Transverse colon (tissue), 4 donors: ENCODE measurements at regions of chr12 and their contacts with region 1.

Region 1: DNA sequence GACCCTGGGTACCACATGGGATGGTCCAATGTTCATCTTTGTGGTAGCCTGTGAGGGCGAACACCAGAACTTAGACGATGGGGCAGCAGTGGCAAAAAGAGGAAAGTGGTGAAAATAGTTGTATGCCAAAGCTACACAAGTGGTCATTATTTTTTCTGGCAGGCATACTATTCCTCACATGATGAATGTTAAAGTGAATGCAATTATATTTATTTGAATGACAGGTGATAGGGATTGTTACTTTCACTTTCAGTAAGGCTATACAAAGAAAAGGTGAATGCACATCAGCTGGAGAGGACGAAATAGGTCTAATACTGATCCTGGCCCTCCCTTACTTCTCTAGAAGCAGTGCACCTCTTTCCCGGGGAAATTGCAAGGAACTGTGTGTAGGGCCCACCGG is 470.1 kb downstream of the TMTC2 start:
- DNase-seq: no peak
- H3K4me3 ChIP-seq: no peak overlapping the region
- H3K27ac ChIP-seq: no peak overlapping the region
- H3K4me1 ChIP-seq: no peaks in the 10 kb centered on the region
- H3K27me3 ChIP-seq: no peaks in the 10 kb centered on the region
- CTCF ChIP-seq: no peak
- EP300 ChIP-seq: no peak
- POLR2A ChIP-seq: no peak

Region 2: GRCh38 chr12:83102499-83102898 is 54.3 kb before region 1 on chr12:
- in situ Hi-C with region 1: no loop called
- intact Hi-C with region 1: no loop called
- DNase-seq: no peak
- H3K4me3 ChIP-seq: no peak overlapping the region
- H3K27ac ChIP-seq: no peak overlapping the region
- H3K4me1 ChIP-seq: no peaks in the 10 kb centered on the region
- H3K27me3 ChIP-seq: no peaks in the 10 kb centered on the region
- CTCF ChIP-seq: no peak
- EP300 ChIP-seq: no peak
- POLR2A ChIP-seq: no peak

Region 3: DNA sequence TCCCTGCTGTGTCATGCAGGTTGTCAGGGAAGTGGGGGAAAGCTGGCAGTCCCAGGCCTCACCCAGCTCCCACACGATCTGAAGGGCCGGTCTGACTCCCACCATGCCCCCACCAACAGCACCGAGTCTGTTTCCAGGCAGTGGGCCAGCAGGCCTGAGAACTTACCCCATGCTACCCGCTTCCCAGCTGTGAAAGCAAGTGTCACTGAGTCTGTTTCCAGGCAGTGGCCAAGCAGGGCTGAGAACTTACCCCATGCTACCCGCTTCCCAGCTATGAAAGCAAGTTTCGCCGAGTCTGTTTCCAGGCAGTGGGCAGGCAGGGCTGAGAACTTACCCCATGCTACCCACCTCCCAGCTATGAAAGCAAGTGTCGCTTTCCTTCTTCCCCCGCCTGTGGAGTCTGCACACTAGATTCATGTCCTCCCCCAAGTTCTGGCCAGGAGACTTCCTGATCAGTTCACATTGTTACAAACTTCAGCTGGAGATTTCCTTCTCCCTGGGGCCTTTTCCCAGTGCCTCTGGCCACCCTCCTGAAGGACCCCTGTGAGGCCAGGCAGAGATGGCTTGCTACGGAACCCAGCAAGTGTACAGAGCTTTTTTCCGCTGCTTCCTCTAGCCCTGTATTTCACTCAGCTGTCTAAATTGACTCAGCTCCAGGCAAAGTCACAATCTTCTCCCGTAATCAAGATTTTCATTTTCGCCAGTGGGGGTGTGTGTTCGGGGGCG is 34.7 kb before region 1 on chr12:
- in situ Hi-C with region 1: no loop called
- intact Hi-C with region 1: loop called (anchors 2 kb)
- DNase-seq: no peak
- H3K4me3 ChIP-seq: no peak overlapping the region
- H3K27ac ChIP-seq: no peak overlapping the region
- H3K4me1 ChIP-seq: peaks cover 0 to 7% (median 0%) of the 10 kb centered on the region in 4 donors
- H3K27me3 ChIP-seq: no peaks in the 10 kb centered on the region
- CTCF ChIP-seq: no peak
- EP300 ChIP-seq: no peak
- POLR2A ChIP-seq: no peak